Tibial artery (tissue), 4 donors: ENCODE measurements at regions of chr4 and their contacts with region 1.

Region 1: GRCh38 chr4:104470770-104471169 is 23.9 kb downstream of the CXXC4 start:
- DNase-seq: no peak
- H3K4me3 ChIP-seq: no peak overlapping the region
- H3K27ac ChIP-seq: no peak overlapping the region
- H3K4me1 ChIP-seq: no peaks in the 10 kb centered on the region
- H3K27me3 ChIP-seq: no peaks in the 10 kb centered on the region
- CTCF ChIP-seq: no peak

Region 2: GRCh38 chr4:104352211-104352610 is 118.6 kb before region 1 on chr4:
- intact Hi-C with region 1: no loop called
- DNase-seq: no peak
- H3K4me3 ChIP-seq: no peak overlapping the region
- H3K27ac ChIP-seq: no peak overlapping the region
- H3K4me1 ChIP-seq: no peaks in the 10 kb centered on the region
- H3K27me3 ChIP-seq: no peaks in the 10 kb centered on the region
- CTCF ChIP-seq: no peak

Region 3: GRCh38 chr4:104429150-104429741 is 41.5 kb before region 1 on chr4:
- intact Hi-C with region 1: no loop called
- DNase-seq: no peak
- H3K4me3 ChIP-seq: no peak overlapping the region
- H3K27ac ChIP-seq: no peak overlapping the region
- H3K4me1 ChIP-seq: peaks cover 0 to 7% (median 0%) of the 10 kb centered on the region in 4 donors
- H3K27me3 ChIP-seq: no peaks in the 10 kb centered on the region
- CTCF ChIP-seq: no peak

Region 4: DNA sequence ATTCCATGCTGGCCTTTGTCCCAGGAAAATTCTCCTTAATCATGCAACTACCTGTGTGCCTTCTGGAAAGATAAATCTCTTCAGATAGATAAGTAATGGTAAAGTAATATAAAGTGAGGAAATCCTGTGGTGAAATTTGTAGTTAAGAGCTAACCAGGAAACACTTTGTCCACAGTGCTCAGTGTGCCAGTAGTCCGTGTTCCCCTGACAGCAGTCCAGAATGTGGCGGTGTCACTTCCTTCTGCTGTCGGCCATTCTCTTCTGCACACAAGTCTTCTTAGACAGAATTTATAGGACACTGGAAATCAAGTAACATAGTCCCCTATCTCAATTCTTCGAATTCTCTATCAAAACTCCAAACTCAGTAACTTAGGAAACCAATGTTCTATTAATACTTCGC is 29.7 kb after region 1 on chr4:
- intact Hi-C with region 1: loop called (anchors 1 kb)
- DNase-seq: no peak
- H3K4me3 ChIP-seq: no peak overlapping the region
- H3K27ac ChIP-seq: no peak overlapping the region
- H3K4me1 ChIP-seq: peaks cover 0 to 1% (median 0%) of the 10 kb centered on the region in 4 donors
- H3K27me3 ChIP-seq: peaks cover 0 to 14% of the 10 kb centered on the region in 2 donors
- CTCF ChIP-seq: no peak

Region 5: GRCh38 chr4:104860238-104861123 is 389.7 kb after region 1 on chr4:
- intact Hi-C with region 1: no loop called
- DNase-seq: peak in 1 of 2 donors; percentile 60
- H3K4me3 ChIP-seq: no peak overlapping the region
- H3K27ac ChIP-seq: no peak overlapping the region
- H3K4me1 ChIP-seq: no peaks in the 10 kb centered on the region
- H3K27me3 ChIP-seq: no peaks in the 10 kb centered on the region
- CTCF ChIP-seq: peak; percentile 67 to 80